Activated CD8-positive, alpha-beta T cell treated with anti-CD3 and anti-CD28 coated beads, Interleukin-2, amount 10 ng/mL, durations not matched to agents 7 days and 5 days (primary cell): ENCODE measurements at regions of chr14 and their contacts with region 1.

Region 1: DNA sequence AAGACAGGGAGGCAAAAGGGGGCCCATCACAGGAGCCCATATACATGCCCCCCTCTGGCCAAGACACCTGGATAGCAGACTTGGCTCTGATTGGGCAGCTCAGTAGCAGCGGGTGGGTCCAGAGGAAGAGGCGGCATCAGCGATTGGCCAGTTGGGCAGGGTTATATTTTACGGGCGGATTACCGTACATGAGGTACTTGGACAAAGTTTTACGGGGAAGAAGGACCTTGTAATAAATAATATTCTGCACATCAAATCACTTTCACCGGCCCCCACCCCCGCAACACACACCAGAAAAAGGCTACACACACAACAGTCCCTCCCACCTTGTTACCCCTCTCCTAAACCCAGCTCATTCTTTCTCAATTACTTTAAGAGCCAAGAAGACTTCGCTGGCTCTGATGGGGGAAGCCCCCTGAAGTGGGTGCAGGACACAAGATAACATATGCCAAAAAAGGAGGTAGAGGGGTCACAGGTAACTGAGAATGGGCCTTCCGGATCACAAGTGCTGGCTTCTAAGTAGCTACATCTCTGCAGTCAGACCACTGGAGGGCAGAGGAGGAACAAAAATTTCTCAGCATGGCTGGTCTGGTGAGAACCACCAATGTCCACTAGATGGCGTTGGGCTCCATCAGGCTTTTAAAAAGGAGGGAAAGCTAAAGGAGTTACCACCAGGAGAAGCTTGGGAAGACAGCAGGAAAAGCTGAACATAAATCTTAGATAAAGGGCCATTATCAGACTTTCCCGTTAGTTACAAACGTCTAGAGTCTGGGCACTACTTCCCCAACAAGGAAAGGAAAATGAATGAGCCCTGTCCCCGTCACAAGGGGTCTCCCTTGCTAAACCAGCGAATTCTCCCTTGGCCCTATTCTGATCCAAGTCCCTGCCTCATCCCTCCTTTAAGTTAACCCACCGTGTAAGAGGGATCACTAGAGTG is 11.4 kb upstream of the CDH24 start:
- DNase-seq: peak; percentile 88
- ATAC-seq: peak; percentile 75
- H3K4me3 Mint-ChIP-seq: peak overlapping the region; percentile 9
- H3K27ac Mint-ChIP-seq: peak overlapping the region; percentile 10
- H3K4me1 Mint-ChIP-seq: peaks cover 33% of the 10 kb centered on the region
- H3K27me3 Mint-ChIP-seq: no peaks in the 10 kb centered on the region

Region 2: DNA sequence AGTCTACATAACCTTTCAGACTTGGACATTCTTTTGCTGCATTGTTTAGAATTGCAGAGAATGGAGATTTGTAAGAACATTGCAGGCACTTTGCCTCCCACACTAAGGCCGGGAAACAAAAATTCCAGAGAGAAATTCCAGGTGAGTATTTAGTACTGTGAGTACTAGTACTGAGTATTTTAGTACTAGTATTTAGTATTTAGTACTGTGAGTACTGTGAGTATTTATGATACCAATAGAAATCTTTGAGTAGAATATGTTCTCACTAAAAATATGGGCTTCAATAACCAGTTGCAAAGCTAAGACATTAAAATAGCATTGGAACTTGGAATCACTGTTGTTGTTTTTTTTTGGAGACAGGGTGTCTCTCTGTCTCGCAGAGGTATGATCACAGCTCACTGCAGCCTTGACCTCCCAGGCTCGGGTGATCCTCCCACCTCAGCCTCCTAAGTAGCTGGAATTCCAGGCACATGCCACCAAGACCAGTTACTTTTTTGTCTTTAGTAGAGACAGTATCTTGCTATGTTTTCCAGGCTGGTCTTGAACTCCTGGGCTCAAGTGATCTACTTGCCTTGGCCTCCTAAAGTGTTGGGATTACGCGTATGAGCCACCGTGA is 106.6 kb before region 1 on chr14:
- CTCF ChIA-PET with region 1: interaction called, 18 read pairs
- POLR2A ChIA-PET with region 1: no interaction called
- DNase-seq: no peak
- ATAC-seq: no peak
- H3K4me3 Mint-ChIP-seq: no peak overlapping the region
- H3K27ac Mint-ChIP-seq: no peak overlapping the region
- H3K4me1 Mint-ChIP-seq: peaks cover 8% of the 10 kb centered on the region
- H3K27me3 Mint-ChIP-seq: peaks cover 5% of the 10 kb centered on the region

Region 3: DNA sequence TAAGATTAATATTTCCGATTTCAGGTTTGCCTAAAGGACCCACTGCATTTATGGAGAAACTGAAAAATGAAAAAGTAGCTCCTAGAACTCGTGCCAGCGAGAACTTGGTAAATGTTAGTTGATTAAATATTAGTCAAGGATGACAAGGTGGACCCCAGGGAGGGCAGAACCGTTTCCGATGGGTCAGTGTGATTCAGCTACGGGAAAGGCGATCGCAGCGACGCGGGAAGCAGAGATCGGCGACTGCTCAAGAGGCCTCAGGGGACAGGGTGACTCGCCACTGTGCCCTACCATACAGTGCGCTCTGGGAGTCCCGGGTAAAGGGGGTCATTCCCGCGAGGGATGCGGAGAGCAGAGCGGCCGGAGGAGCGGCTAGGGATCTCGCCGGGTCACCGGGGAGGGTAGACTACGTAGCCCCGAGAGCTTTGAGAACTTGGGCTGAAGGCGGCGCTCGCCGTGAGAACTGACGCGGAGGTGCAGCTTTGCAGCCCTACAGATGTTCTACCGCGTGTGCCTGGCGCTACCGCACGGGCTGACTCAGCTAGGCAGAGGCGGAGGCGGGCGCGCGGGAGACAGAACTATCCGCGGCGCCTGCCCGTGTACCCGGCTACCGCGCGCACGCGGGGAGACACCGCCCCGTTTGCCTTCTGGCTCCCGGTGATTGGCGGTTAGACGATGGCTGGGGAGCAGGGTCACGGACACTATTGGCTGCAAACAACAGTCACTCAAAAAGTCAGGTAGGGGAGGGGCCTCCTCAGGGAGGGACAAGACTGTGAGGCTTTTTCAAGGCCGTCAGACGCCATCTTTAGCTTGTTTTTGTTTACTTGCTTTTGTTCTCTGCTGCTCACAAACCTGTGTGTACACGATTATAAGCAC is 62.0 kb before region 1 on chr14:
- CTCF ChIA-PET with region 1: interaction called, 39 read pairs
- POLR2A ChIA-PET with region 1: interaction called, 4 read pairs
- DNase-seq: peak; percentile 98
- ATAC-seq: peak; percentile 99
- H3K4me3 Mint-ChIP-seq: peak overlapping the region; percentile 94
- H3K27ac Mint-ChIP-seq: peak overlapping the region; percentile 98
- H3K4me1 Mint-ChIP-seq: peaks cover 51% of the 10 kb centered on the region
- H3K27me3 Mint-ChIP-seq: no peaks in the 10 kb centered on the region

Region 4: DNA sequence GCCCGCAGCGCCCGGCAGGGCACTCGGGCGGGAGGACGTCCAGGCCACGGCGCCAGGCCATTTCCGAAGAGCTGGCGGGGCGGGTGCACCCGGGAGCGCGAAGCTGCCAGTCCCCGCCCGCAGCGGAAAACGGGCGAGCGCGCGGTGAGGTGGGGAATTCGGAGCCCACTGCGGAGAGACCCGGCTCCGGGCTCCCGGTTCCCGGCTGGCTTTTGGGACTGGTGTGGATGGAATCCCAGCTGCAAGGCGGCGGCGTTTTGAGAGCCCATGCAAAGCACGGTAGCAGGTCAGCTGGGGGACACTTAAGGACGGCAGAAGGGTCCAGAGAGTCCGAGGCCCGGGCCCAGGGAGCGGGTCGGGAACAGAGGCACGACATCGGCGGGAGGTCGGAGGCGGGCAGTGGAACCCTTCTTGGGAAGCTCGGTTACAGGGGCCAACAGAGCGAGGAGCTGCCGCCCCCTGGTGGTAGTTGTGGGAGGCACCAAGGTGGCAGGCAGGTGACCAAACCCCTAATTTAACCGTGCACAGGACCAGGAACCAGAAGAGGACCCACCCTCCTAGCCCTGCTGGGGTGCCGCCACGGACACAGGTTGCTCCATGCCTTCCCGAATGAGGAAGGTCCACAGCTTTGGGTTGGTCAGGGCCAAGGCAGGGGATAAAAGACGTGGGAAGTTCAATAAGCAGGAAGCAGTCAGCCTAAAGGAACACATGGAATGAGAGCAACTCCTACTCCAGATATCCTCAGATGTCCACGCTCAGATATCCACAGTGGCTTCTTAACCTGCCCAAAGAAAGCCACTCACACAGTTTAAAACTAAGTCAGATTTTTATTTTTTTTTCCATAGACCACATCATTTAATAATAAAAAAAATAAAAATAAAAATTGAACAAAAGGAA is 10.7 kb before region 1 on chr14:
- CTCF ChIA-PET with region 1: interaction called, 91 read pairs
- POLR2A ChIA-PET with region 1: interaction called, 7 read pairs
- DNase-seq: peak; percentile 91
- ATAC-seq: peak; percentile 76
- H3K4me3 Mint-ChIP-seq: peak overlapping the region; percentile 83
- H3K27ac Mint-ChIP-seq: peak overlapping the region; percentile 34
- H3K4me1 Mint-ChIP-seq: peaks cover 18% of the 10 kb centered on the region
- H3K27me3 Mint-ChIP-seq: peaks cover 9% of the 10 kb centered on the region

Region 5: GRCh38 chr14:23113431-23114119 is 44.8 kb after region 1 on chr14:
- CTCF ChIA-PET with region 1: interaction called, 23 read pairs
- POLR2A ChIA-PET with region 1: no interaction called
- DNase-seq: no peak
- ATAC-seq: no peak
- H3K4me3 Mint-ChIP-seq: no peak overlapping the region
- H3K27ac Mint-ChIP-seq: no peak overlapping the region
- H3K4me1 Mint-ChIP-seq: peaks cover 7% of the 10 kb centered on the region
- H3K27me3 Mint-ChIP-seq: no peaks in the 10 kb centered on the region

Region 6: GRCh38 chr14:23186913-23187654 is 118.3 kb after region 1 on chr14:
- CTCF ChIA-PET with region 1: interaction called, 33 read pairs
- POLR2A ChIA-PET with region 1: no interaction called
- DNase-seq: peak; percentile 47
- ATAC-seq: no peak
- H3K4me3 Mint-ChIP-seq: no peak overlapping the region
- H3K27ac Mint-ChIP-seq: no peak overlapping the region
- H3K4me1 Mint-ChIP-seq: no peaks in the 10 kb centered on the region
- H3K27me3 Mint-ChIP-seq: peaks cover 12% of the 10 kb centered on the region